Esophagus muscularis mucosa (tissue), 4 donors: ENCODE measurements at regions of chr2 and their contacts with region 1.

Region 1: DNA sequence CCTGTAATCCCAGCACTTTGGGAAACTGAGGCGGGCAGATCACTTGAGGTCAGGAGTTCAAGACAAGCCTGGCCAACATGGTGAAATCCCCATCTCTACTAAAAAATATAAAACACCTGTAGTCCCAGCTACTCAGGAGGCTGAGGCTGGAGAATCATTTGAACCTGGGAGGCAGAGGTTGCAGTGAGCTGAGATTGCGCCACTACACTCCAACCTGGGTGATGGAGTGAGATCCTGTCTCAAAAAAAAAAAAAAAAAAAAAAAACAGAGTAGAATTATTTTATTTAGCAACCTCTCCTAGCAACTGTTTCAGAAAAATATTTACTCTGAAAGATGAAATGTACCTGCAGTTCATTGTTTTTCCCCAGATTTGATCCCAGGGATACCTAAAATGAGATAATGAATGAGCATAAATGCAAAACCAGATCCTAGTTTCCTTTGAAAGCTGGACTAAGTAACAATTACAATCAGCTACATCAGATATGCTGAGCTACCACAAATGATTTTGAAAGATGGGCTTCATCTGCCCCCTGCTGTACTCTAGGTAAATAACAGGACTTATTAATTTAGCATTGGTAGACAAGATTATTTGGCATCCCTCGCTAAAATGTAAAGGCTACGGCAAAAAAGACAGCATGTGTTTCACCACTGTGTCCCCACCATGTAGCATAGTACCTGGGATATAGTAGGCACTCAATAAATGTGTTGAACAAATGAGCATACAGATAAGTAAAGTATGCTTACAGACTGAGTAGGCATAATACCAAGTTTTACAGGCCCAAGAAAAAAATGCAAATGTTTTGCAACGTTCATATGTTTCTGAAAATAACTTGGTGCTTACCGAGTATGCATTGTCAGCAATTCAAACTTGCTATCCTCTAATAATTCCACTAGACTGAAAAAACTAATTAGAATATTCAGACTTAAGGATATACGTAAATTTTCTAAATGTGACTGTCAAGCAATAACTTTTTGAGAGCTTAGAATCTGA is 102.5 kb downstream of the ATL2 start:
- DNase-seq: no peak
- H3K4me3 ChIP-seq: no peak overlapping the region
- H3K27ac ChIP-seq: no peak overlapping the region
- H3K4me1 ChIP-seq: peaks cover 0 to 4% (median 0%) of the 10 kb centered on the region in 4 donors
- H3K27me3 ChIP-seq: no peaks in the 10 kb centered on the region
- CTCF ChIP-seq: peak; percentile 66 to 73 (median 70)
- EP300 ChIP-seq: no peak
- POLR2A ChIP-seq: no peak

Region 2: GRCh38 chr2:37394796-37395555 is 879.6 kb before region 1 on chr2:
- intact Hi-C with region 1: loop called (anchors 5 kb)
- DNase-seq: no peak
- H3K4me3 ChIP-seq: no peak overlapping the region
- H3K27ac ChIP-seq: no peak overlapping the region
- H3K4me1 ChIP-seq: peaks cover under 1 to 22% (median 9%) of the 10 kb centered on the region in 4 donors
- H3K27me3 ChIP-seq: no peaks in the 10 kb centered on the region
- CTCF ChIP-seq: no peak
- EP300 ChIP-seq: no peak
- POLR2A ChIP-seq: no peak

Region 3: DNA sequence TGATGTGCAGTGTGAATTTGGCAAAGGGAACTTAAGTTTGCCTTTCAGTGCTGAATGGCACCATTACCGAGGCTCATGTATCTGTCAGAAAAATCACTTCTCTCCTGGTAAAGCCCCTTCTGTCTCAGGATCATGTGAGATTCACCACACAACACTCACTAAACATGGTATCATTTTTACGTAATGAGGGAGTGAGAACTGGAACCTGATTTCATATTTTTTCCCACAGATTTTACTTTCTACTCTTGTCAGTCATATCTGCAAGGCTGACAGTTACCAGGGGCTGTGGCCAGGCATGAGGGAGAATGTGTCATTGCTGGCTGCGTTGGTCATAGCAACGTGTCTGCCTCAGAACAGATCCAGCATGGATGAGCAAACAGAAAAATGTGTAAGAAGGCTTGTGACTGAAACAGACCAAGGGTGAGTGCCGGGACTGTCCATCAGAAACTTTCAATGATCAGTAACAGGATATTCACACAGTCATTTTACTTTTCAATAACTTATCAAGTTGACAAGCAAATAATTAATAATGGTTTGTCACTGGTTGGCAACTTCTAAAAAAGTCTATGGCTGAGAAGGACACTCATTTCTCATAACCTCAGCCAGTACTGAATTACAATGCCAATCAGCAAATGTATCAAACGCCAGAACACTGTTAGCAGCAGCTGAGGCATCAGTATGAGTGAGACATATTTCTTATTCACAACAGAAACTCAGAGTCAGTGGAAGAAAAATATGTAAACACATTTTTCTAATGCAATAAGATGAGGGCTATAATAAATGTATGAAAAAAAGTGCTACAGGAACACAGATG is 703.6 kb before region 1 on chr2:
- intact Hi-C with region 1: no loop called
- DNase-seq: no peak
- H3K4me3 ChIP-seq: no peak overlapping the region
- H3K27ac ChIP-seq: peak overlapping the region; percentile 14 to 66 (median 43)
- H3K4me1 ChIP-seq: peaks cover 10 to 65% (median 42%) of the 10 kb centered on the region in 4 donors
- H3K27me3 ChIP-seq: no peaks in the 10 kb centered on the region
- CTCF ChIP-seq: no peak
- EP300 ChIP-seq: no peak
- POLR2A ChIP-seq: no peak

Region 4: GRCh38 chr2:37890893-37891495 is 383.6 kb before region 1 on chr2:
- intact Hi-C with region 1: loop called (anchors 10 kb)
- DNase-seq: no peak
- H3K4me3 ChIP-seq: no peak overlapping the region
- H3K27ac ChIP-seq: no peak overlapping the region
- H3K4me1 ChIP-seq: peaks cover 0 to 14% (median 9%) of the 10 kb centered on the region in 4 donors
- H3K27me3 ChIP-seq: no peaks in the 10 kb centered on the region
- CTCF ChIP-seq: peak; percentile 69 to 87 (median 75)
- EP300 ChIP-seq: no peak
- POLR2A ChIP-seq: no peak

Region 5: DNA sequence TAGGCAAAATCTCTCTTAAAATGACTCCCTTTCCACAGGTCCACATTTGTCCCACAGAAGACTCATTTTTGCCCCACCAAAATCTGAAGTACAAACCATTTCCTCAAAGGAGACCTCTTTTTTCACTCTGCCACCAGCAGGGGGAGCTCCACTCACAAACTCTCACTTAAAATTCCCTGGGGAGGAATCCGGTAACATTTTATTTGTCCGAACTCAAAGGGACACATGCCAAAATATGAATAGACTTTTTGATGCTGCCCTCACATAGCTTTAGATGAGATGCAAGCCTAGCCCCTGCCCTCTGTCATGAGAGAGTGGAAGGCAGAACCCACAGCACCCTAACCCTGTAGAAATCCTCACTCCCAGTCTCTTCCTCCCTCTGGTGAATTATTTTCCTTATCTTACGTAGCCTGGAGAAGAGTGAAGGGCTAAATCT is 292.4 kb before region 1 on chr2:
- intact Hi-C with region 1: loop called (anchors 2 kb)
- DNase-seq: peak; percentile 95
- H3K4me3 ChIP-seq: peak overlapping the region; percentile 19 to 52 (median 32)
- H3K27ac ChIP-seq: no peak overlapping the region
- H3K4me1 ChIP-seq: peaks cover 4 to 6% (median 4%) of the 10 kb centered on the region in 4 donors
- H3K27me3 ChIP-seq: no peaks in the 10 kb centered on the region
- CTCF ChIP-seq: peak; percentile 78 to 83 (median 79)
- EP300 ChIP-seq: no peak
- POLR2A ChIP-seq: no peak

Region 6: GRCh38 chr2:38377050-38377828 is 102.7 kb after region 1 on chr2 and contains the start of gene ATL2:
- intact Hi-C with region 1: no loop called
- DNase-seq: peak; percentile 98
- H3K4me3 ChIP-seq: peak within 1 kb of the TSS; percentile 86 to 98 (median 96)
- H3K27ac ChIP-seq: peak within 1 kb of the TSS; percentile 97 to 100 (median 100)
- H3K4me1 ChIP-seq: peaks cover 20 to 46% (median 45%) of the 10 kb centered on the region in 4 donors
- H3K27me3 ChIP-seq: no peaks in the 10 kb centered on the region
- CTCF ChIP-seq: no peak
- EP300 ChIP-seq: peak; percentile 12
- POLR2A ChIP-seq: peak; percentile 82
- total RNA-seq, gene ATL2: 159 to 260 (median 231) TPM

Region 7: GRCh38 chr2:38515160-38516074 is 240.8 kb after region 1 on chr2:
- intact Hi-C with region 1: no loop called
- DNase-seq: no peak
- H3K4me3 ChIP-seq: peak overlapping the region; percentile 40 to 56 (median 41)
- H3K27ac ChIP-seq: peak overlapping the region; percentile 87 to 90 (median 90)
- H3K4me1 ChIP-seq: peaks cover 0 to 58% (median 45%) of the 10 kb centered on the region in 4 donors
- H3K27me3 ChIP-seq: no peaks in the 10 kb centered on the region
- CTCF ChIP-seq: no peak
- EP300 ChIP-seq: no peak
- POLR2A ChIP-seq: no peak

Region 8: DNA sequence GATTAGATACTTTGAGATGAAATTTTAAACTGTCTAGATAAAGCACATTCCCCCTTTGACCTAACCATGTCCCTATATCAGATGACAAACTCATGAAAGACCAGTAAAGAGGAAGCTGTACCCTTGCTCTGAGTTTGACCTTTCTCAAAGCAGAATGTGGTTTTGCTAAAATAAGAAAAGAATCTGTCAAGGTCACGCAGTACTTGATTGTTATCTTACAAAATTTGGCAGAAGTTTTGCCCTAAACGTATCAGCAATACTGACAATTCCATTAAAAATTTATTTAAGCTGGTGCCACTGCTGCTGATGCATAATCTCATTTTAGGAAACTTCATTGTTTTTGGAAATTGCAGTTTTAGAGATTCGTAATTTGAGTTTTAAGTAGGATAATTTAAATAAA is 360.1 kb after region 1 on chr2:
- intact Hi-C with region 1: no loop called
- DNase-seq: no peak
- H3K4me3 ChIP-seq: no peak overlapping the region
- H3K27ac ChIP-seq: no peak overlapping the region
- H3K4me1 ChIP-seq: no peaks in the 10 kb centered on the region
- H3K27me3 ChIP-seq: no peaks in the 10 kb centered on the region
- CTCF ChIP-seq: no peak
- EP300 ChIP-seq: no peak
- POLR2A ChIP-seq: no peak